Colonic mucosa (tissue), 4 donors: ENCODE measurements at regions of chr20 and their contacts with region 1.

Region 1: DNA sequence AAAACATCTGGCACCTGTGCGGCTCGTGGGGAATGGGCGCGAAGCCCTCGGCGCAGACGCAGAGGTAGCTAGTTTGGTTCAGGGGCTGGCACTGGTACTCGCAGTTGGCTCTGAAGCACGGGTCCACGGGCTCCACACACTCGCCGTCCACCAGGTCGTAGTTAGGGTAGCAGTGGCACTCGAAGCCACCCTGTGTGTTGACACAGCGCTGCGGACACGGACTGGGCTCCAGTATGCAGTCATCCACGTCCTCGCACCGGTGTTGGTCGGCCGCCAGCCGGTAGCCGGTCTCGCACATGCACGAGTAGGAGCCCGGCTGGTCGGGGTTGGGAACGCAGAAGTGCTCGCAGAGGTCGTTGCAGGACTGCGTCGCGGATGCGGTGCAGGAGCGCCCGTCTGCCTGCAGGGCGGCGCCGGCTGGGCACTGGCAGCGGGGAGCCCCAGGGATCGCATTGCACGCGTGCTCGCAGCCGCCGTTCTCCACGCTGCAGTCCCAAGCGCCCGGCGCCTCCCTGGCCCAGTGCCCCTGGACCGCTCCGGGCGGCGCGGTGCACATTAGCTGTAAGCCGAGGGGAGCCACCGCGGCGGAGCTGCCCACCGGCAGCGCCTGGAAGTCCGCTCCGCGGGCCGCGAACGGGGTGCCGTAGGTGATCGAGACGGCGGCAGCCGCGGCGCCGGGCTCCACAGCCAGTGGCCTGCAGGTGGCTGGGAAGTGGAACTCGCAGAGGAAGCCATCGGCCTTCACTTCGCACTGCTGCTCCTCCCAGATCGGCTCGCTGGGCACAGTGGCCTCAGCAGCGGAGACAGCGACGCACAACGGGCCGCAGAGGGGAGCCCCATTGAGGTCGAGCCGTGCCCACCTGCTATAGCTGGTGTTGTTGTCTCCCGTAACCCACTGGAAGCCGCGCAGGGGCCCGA is 930 bp downstream of the THBD start:
- DNase-seq: peak; percentile 32
- H3K4me3 ChIP-seq: peak overlapping the region; percentile 33
- H3K27ac ChIP-seq: peak overlapping the region; percentile 63
- H3K4me1 ChIP-seq: peaks cover 6% of the 10 kb centered on the region
- H3K27me3 ChIP-seq: peaks cover 53% of the 10 kb centered on the region
- CTCF ChIP-seq: peak; percentile 25

Region 2: GRCh38 chr20:21981597-21982344 is 1066.8 kb before region 1 on chr20:
- intact Hi-C with region 1: no loop called
- DNase-seq: no peak
- H3K4me3 ChIP-seq: no peak overlapping the region
- H3K27ac ChIP-seq: no peak overlapping the region
- H3K4me1 ChIP-seq: no peaks in the 10 kb centered on the region
- H3K27me3 ChIP-seq: no peaks in the 10 kb centered on the region
- CTCF ChIP-seq: no peak

Region 3: DNA sequence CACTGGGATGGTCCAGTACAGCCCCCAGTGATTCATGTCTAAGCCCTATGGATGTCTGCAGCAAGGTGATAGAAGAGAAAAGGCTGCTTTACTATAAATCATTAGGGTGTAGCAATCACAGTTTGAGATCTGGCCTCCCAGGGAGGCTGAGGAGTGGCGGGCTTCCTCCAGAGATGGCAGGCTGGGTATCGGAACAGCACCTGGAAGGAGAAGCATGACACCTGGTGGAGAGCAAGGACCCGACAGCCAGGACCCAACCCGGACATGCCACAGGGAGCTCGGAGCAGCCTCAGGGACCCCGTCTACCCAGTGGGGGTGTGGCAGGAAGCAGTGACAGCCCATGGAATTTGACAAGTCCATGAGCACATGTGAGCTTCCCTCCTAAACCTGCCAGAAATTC is 152.4 kb after region 1 on chr20:
- intact Hi-C with region 1: loop called (anchors 10 kb)
- DNase-seq: peak; percentile 28
- H3K4me3 ChIP-seq: no peak overlapping the region
- H3K27ac ChIP-seq: no peak overlapping the region
- H3K4me1 ChIP-seq: no peaks in the 10 kb centered on the region
- H3K27me3 ChIP-seq: no peaks in the 10 kb centered on the region
- CTCF ChIP-seq: peak; percentile 33